Heart right ventricle (tissue), 16 donors: ENCODE measurements at regions of chr9 and their contacts with region 1.

Region 1: GRCh38 chr9:589723-590122 is 251.8 kb upstream of the DMRT1 start:
- DNase-seq: no peak
- ATAC-seq: peak in 7 of 8 donors; percentile 11 to 75 (median 36)
- H3K4me3 ChIP-seq: no peak overlapping the region
- H3K27ac ChIP-seq: peak overlapping the region; percentile 7 to 86 (median 74)
- H3K4me1 ChIP-seq: peaks cover 8 to 78% (median 36%) of the 10 kb centered on the region in 9 donors
- H3K27me3 ChIP-seq: no peaks in the 10 kb centered on the region
- CTCF ChIP-seq: no peak

Region 2: DNA sequence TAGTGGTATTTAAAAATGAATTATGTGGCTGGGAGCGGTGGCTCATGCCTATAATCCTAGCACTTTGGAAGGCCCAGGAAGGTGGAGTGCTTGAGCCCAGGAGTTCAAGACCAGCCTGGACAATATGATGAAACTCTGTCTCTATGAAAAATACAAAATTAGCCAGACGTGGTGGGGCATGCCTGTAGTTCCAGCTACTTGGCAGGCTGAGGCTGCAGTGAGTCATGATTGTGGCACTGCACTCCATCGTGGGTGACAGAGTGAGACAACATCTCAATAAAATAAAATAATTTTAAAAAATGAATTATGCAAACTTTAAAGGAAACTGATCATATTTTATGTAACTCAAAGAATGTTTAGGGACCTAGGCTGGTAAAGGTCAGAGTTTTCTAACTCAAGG is 59.0 kb before region 1 on chr9:
- intact Hi-C with region 1: loop called in 2 of 10 experiments (anchors 5 to 10 kb)
- DNase-seq: peak; percentile 33 to 36
- ATAC-seq: peak in 6 of 8 donors; percentile 39 to 86 (median 59)
- H3K4me3 ChIP-seq: no peak overlapping the region
- H3K27ac ChIP-seq: peak overlapping the region in 4 of 10 donors; percentile 1 to 16 (median 8)
- H3K4me1 ChIP-seq: peaks cover 4 to 60% (median 36%) of the 10 kb centered on the region in 9 donors
- H3K27me3 ChIP-seq: no peaks in the 10 kb centered on the region
- CTCF ChIP-seq: no peak

Region 3: DNA sequence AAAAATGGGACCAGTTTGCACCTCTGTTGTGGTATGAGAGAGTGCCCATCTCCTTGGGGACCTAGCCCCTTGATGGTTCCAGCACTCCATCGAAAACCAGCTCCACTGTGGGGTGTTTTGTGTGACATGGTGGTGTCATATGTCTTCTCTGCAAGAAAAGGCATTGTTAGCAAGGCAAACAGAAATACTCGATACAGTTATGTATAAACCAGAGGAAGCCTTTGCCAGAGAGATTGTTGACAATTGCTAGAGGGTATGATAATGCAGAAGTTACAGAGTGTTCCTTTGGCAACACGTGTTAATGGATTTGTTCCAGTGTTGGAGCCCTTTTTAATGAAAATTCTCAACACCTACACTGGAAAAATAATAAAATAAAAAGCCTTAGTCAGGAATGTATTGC is 18.7 kb before region 1 on chr9:
- intact Hi-C with region 1: loop called in 1 of 10 experiments (anchors 1 kb)
- DNase-seq: no peak
- ATAC-seq: peak in 7 of 8 donors; percentile 20 to 76 (median 56)
- H3K4me3 ChIP-seq: no peak overlapping the region
- H3K27ac ChIP-seq: peak overlapping the region; percentile 23 to 82 (median 72)
- H3K4me1 ChIP-seq: peaks cover 7 to 77% (median 35%) of the 10 kb centered on the region in 9 donors
- H3K27me3 ChIP-seq: no peaks in the 10 kb centered on the region
- CTCF ChIP-seq: no peak

Region 4: GRCh38 chr9:607417-607816 is 17.7 kb after region 1 on chr9:
- intact Hi-C with region 1: no loop called
- DNase-seq: no peak
- ATAC-seq: peak in 1 of 8 donors; percentile 20
- H3K4me3 ChIP-seq: no peak overlapping the region
- H3K27ac ChIP-seq: no peak overlapping the region
- H3K4me1 ChIP-seq: peaks cover 0 to 30% (median 8%) of the 10 kb centered on the region in 9 donors
- H3K27me3 ChIP-seq: no peaks in the 10 kb centered on the region
- CTCF ChIP-seq: no peak